ENCODE measurements at regions of chr9 and their contacts with region 1.

Region 1: GRCh38 chr9:19116107-19116790 is 11.0 kb downstream of the PLIN2 start:
- DNase-seq: no peak
- H3K4me3 ChIP-seq: no peak overlapping the region
- H3K27ac ChIP-seq: no peak overlapping the region
- H3K4me1 ChIP-seq: 0 out of 7 replicates have a peak, but pooled peaks cover 0 to 1% (median 0%) of the 10 kb centered on the region in 4 experiments
- H3K27me3 ChIP-seq: no peaks in the 10 kb centered on the region
- CTCF ChIP-seq: no peak
- EP300 ChIP-seq: no peak
- POLR2A ChIP-seq: no peak
- RAD21 ChIP-seq: no peak

Region 2: DNA sequence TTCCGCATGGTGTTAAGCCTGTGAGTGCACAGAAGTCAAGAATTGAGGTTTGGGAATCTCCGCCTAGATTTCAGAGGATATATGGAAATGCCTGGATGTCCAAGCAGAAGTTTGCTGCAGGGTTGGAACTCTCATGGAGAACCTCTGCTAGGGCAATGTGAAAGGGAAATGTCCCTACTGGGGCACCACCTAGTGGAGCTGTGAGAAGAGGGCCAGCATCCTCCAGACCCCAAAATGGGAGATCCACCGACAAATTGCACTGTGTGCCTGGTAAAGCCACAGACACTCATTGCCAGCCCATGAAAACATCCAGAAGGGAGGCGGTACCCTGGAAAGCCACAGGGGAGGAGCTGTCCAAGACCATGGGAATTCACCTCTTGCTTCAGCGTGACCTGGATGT is 79.6 kb before region 1 on chr9:
- CTCF ChIA-PET with region 1: no interaction called
- POLR2A ChIA-PET with region 1: no interaction called
- DNase-seq: no peak
- H3K4me3 ChIP-seq: no peak overlapping the region
- H3K27ac ChIP-seq: no peak overlapping the region
- H3K4me1 ChIP-seq: no peaks in the 10 kb centered on the region
- H3K27me3 ChIP-seq: peaks cover 0 to 4% (median 0%) of the 10 kb centered on the region in 4 experiments; a peak in 1 of 7 replicates
- CTCF ChIP-seq: peak; percentile 14 to 31 (median 17); a peak in 2 of 4 replicates
- EP300 ChIP-seq: no peak
- POLR2A ChIP-seq: no peak
- RAD21 ChIP-seq: 0 out of 4 replicates have a peak, but pooled peaks of 1 of the 2 experiments have one; percentile 16

Region 3: GRCh38 chr9:19102631-19103345 is 13.5 kb before region 1 on chr9 and contains the start of gene HAUS6:
- CTCF ChIA-PET with region 1: interaction called, 4 read pairs
- POLR2A ChIA-PET with region 1: interaction called, 25 read pairs
- DNase-seq: peak; percentile 88 to 91
- H3K4me3 ChIP-seq: peak within 1 kb of the TSS; percentile 92 to 100 (median 94)
- H3K27ac ChIP-seq: peak within 1 kb of the TSS; percentile 70
- H3K4me1 ChIP-seq: peaks cover 0 to 3% (median 0%) of the 10 kb centered on the region in 4 experiments; a peak in 3 of 7 replicates
- H3K27me3 ChIP-seq: no peaks in the 10 kb centered on the region
- CTCF ChIP-seq: peak; percentile 19 to 61 (median 35)
- EP300 ChIP-seq: no peak
- POLR2A ChIP-seq: peak; percentile 63 to 95
- RAD21 ChIP-seq: no peak
- total RNA-seq, gene HAUS6: 52.4 and 53.4 TPM in 2 replicates

Measured in H1 (cell line).